ENCODE measurements at regions of chr21 and their contacts with region 1.

Region 1: DNA sequence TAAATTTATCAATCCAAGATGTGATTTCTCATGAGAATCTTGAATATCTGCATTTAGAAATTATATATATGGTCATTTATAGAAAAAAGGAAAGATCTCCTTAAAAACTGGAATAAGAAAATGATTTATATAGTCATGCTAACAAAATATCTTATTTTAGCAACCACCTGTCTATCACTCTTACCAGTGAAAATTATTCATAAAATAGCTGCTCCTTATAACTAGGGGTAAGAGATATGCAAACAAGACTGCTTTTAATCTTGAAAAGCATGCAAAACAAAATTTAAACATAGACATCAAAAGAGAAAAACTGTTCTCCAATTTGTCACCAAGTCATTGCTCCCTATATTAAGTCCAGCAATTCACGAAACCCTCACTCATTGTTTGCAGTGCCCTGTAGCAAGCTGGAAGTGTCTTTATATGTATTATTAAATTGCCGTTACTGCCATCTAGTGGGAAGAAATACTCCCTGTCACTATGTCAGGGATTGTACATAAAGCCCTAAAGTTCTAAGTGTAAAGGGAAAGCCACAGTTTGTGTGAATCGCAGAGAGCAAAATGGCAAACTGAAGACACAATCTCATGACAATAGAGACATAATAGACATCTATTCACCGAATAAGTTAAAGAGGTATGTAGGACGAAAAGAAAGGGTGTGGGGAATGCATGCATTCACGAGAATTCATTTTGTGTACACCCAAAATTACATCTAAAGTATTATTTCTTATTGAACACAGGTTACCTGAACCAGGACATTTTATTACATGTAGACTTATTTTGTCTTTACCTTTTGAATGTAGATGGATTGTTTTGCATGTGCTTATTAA is 600.5 kb downstream of the USP25 start:
- DNase-seq: no peak
- H3K4me3 ChIP-seq: no peak overlapping the region
- H3K27me3 ChIP-seq: no peaks in the 10 kb centered on the region
- CTCF ChIP-seq: peak; percentile 69

Region 2: DNA sequence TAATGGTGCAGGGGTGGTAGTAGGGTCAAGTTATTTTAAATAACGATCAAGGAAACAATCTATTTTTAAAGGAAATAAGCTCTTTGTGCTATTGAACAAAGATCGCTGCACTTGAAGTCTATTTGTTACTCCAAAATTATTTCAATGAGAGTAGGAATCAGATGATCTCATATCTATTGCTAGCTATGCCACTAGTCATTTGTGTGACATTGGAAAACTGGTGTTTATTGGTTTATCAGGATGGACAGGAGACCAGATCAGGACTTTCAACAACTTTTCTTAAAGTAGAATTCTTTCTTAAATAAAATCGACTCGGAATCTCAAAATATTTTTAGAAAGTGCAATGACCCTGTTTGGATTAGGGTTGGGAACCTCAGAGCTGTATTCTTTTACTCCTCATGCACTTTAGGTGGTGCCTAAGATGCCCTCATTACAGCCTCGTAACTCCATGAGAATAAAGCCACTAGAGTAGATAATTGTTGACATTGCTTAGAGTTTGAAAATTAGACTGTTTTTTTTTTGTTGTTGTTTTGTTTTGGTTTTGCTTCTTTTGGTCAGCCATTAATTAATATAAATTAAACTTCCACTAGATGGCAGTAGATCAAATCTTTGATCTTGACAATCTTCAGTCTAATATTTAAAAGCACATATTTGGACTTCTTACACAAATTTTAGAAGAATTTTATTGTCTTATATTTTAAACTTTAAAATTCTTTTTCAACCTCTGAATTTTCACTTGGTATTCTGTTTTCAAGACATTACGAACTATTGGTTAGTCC is 248.1 kb before region 1 on chr21:
- CTCF ChIA-PET with region 1: interaction called, 65 read pairs
- POLR2A ChIA-PET with region 1: no interaction called
- DNase-seq: no peak
- H3K4me3 ChIP-seq: no peak overlapping the region
- H3K27me3 ChIP-seq: no peaks in the 10 kb centered on the region
- CTCF ChIP-seq: peak; percentile 30; the same call in 1 of the 2 replicates

Region 3: DNA sequence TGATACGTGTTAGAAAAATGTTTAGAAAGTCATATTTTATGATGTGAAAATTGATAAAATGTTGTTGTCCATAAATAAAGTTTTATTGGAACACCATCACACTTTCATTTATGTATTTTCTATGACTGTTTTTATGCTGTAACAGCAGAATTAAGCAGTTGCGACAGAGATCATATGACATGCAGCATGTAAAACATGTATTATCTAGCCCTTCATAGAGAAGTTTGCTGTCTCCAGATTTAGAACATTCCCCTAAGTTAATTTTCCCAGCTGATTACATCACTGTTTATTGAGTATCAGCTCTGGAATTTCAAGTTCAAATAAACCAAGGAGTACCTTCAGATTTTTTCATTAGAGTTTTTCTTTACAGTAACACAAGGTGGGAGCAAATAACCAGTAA is 192.2 kb after region 1 on chr21:
- CTCF ChIA-PET with region 1: no interaction called
- POLR2A ChIA-PET with region 1: no interaction called
- DNase-seq: peak; percentile 31
- H3K4me3 ChIP-seq: no peak overlapping the region
- H3K27me3 ChIP-seq: no peaks in the 10 kb centered on the region
- CTCF ChIP-seq: no peak